CD4-positive, alpha-beta memory T cell (primary cell): ENCODE measurements at regions of chr10 and their contacts with region 1.

Region 1: GRCh38 chr10:102167861-102168260 is 15.7 kb downstream of the NOLC1 start:
- DNase-seq: no peak
- H3K4me3 ChIP-seq: no peak overlapping the region
- H3K4me3 Mint-ChIP-seq: no peak overlapping the region
- H3K27ac ChIP-seq: no peak overlapping the region
- H3K27ac Mint-ChIP-seq: peak overlapping the region in 1 of 7 donors; percentile 36
- H3K4me1 ChIP-seq: peaks cover 4% of the 10 kb centered on the region
- H3K4me1 Mint-ChIP-seq: peaks cover 4 to 11% (median 6%) of the 10 kb centered on the region in 4 donors
- H3K27me3 ChIP-seq: no peaks in the 10 kb centered on the region
- H3K27me3 Mint-ChIP-seq: no peaks in the 10 kb centered on the region

Region 2: DNA sequence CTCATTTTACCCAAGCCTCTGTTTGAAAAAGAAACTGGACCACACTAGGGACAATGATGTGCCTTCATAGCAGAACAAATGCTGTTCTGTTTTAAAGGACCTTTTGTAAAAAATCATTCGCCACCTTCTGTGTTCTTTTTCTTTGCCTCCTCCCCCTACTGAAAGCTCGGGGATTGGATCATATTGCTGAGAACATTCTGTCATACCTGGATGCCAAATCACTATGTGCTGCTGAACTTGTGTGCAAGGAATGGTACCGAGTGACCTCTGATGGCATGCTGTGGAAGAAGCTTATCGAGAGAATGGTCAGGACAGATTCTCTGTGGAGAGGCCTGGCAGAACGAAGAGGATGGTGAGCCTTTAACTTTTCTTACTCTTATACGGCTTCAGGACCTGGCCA is 642.0 kb before region 1 on chr10:
- CTCF ChIA-PET with region 1: no interaction called
- POLR2A ChIA-PET with region 1: no interaction called
- intact Hi-C with region 1: no loop called
- DNase-seq: no peak
- H3K4me3 ChIP-seq: no peak overlapping the region
- H3K4me3 Mint-ChIP-seq: no peak overlapping the region
- H3K27ac ChIP-seq: no peak overlapping the region
- H3K27ac Mint-ChIP-seq: no peak overlapping the region
- H3K4me1 ChIP-seq: no peaks in the 10 kb centered on the region
- H3K4me1 Mint-ChIP-seq: no peaks in the 10 kb centered on the region
- H3K27me3 ChIP-seq: no peaks in the 10 kb centered on the region
- H3K27me3 Mint-ChIP-seq: no peaks in the 10 kb centered on the region

Region 3: DNA sequence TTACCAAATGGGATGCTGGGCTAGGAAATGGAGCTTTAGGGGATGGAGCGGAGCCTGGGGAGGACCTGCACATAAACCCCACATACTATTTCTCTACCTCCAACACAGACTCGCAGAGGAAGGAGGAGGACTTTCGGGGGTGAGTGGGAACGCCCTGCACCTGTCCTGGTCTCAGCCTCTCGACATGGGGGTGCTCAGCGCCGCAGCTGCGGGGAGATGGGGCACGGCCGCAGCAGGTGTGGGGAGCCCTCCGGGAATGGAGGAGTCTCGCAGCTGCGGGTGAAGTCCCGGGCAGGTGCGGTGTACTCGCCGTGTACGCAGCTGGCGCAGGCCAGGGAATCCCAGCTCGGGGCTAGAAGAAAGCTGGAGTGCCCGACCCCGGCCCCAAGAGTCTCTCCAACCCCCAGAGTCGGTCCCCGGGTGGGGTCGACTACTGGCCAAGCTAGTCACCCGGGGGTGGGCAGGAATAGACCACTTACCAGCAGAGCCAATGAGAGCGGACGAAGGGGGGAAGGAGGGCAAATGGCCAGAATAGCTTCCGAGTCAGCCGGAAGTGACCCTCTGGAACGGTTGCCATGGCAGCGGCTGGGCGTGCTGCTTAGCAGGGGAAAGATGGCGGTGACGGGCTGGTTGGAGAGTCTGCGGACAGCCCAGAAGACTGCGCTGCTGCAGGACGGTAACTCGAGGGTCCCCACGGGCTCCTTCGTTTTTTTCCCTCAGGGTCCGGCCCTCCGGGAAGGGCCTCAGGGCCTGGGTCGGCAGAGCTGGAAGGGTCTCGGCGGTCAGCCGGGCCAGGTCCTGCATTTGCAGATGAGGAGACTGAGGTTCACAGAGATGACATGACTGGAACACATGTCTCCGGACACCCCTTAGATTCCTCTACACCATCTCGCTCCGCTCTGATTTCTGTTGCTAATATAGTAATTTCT is 579.9 kb before region 1 on chr10 and contains the starts of genes DPCD and POLL:
- CTCF ChIA-PET with region 1: no interaction called
- POLR2A ChIA-PET with region 1: no interaction called
- intact Hi-C with region 1: no loop called
- DNase-seq: peak; percentile 83 to 86 (median 85)
- H3K4me3 ChIP-seq: peak within 1 kb of the TSS; percentile 79 to 81
- H3K4me3 Mint-ChIP-seq: peak within 1 kb of the TSS; percentile 94 to 97 (median 94)
- H3K27ac ChIP-seq: peak within 1 kb of the TSS; percentile 64
- H3K27ac Mint-ChIP-seq: peak within 1 kb of the TSS; percentile 82 to 93 (median 91)
- H3K4me1 ChIP-seq: peaks cover 17% of the 10 kb centered on the region
- H3K4me1 Mint-ChIP-seq: peaks cover 11 to 40% (median 26%) of the 10 kb centered on the region in 4 donors
- H3K27me3 ChIP-seq: no peaks in the 10 kb centered on the region
- H3K27me3 Mint-ChIP-seq: no peaks in the 10 kb centered on the region
- total RNA-seq, gene DPCD: 1.0 to 1.2 TPM
- total RNA-seq, gene POLL: 57.0 to 59.3 TPM

Region 4: GRCh38 chr10:102188298-102188940 is 20.6 kb after region 1 on chr10:
- CTCF ChIA-PET with region 1: interaction called, 11 read pairs
- POLR2A ChIA-PET with region 1: no interaction called
- intact Hi-C with region 1: no loop called
- DNase-seq: no peak
- H3K4me3 ChIP-seq: no peak overlapping the region
- H3K4me3 Mint-ChIP-seq: peak overlapping the region in 2 of 8 donors; percentile 35 to 81
- H3K27ac ChIP-seq: peak overlapping the region; percentile 32
- H3K27ac Mint-ChIP-seq: peak overlapping the region in 5 of 7 donors; percentile 19 to 68 (median 55)
- H3K4me1 ChIP-seq: peaks cover 22% of the 10 kb centered on the region
- H3K4me1 Mint-ChIP-seq: peaks cover 9 to 17% (median 10%) of the 10 kb centered on the region in 4 donors
- H3K27me3 ChIP-seq: no peaks in the 10 kb centered on the region
- H3K27me3 Mint-ChIP-seq: no peaks in the 10 kb centered on the region

Region 5: GRCh38 chr10:102371295-102371694 is 203.4 kb after region 1 on chr10:
- CTCF ChIA-PET with region 1: no interaction called
- POLR2A ChIA-PET with region 1: no interaction called
- intact Hi-C with region 1: no loop called
- DNase-seq: no peak
- H3K4me3 ChIP-seq: no peak overlapping the region
- H3K4me3 Mint-ChIP-seq: no peak overlapping the region
- H3K27ac ChIP-seq: no peak overlapping the region
- H3K27ac Mint-ChIP-seq: no peak overlapping the region
- H3K4me1 ChIP-seq: no peaks in the 10 kb centered on the region
- H3K4me1 Mint-ChIP-seq: no peaks in the 10 kb centered on the region
- H3K27me3 ChIP-seq: no peaks in the 10 kb centered on the region
- H3K27me3 Mint-ChIP-seq: no peaks in the 10 kb centered on the region

Region 6: GRCh38 chr10:102399217-102400089 is 231.6 kb after region 1 on chr10:
- CTCF ChIA-PET with region 1: interaction called, 5 read pairs
- POLR2A ChIA-PET with region 1: interaction called, 3 read pairs
- intact Hi-C with region 1: loop called (anchors 1 kb)
- DNase-seq: peak; percentile 86 to 90 (median 87)
- H3K4me3 ChIP-seq: peak overlapping the region in 1 of 2 donors; percentile 49
- H3K4me3 Mint-ChIP-seq: peak overlapping the region; percentile 53 to 81 (median 74)
- H3K27ac ChIP-seq: peak overlapping the region; percentile 100
- H3K27ac Mint-ChIP-seq: peak overlapping the region; percentile 89 to 100 (median 100)
- H3K4me1 ChIP-seq: peaks cover 44% of the 10 kb centered on the region
- H3K4me1 Mint-ChIP-seq: peaks cover 19 to 68% (median 32%) of the 10 kb centered on the region in 4 donors
- H3K27me3 ChIP-seq: no peaks in the 10 kb centered on the region
- H3K27me3 Mint-ChIP-seq: no peaks in the 10 kb centered on the region

Region 7: DNA sequence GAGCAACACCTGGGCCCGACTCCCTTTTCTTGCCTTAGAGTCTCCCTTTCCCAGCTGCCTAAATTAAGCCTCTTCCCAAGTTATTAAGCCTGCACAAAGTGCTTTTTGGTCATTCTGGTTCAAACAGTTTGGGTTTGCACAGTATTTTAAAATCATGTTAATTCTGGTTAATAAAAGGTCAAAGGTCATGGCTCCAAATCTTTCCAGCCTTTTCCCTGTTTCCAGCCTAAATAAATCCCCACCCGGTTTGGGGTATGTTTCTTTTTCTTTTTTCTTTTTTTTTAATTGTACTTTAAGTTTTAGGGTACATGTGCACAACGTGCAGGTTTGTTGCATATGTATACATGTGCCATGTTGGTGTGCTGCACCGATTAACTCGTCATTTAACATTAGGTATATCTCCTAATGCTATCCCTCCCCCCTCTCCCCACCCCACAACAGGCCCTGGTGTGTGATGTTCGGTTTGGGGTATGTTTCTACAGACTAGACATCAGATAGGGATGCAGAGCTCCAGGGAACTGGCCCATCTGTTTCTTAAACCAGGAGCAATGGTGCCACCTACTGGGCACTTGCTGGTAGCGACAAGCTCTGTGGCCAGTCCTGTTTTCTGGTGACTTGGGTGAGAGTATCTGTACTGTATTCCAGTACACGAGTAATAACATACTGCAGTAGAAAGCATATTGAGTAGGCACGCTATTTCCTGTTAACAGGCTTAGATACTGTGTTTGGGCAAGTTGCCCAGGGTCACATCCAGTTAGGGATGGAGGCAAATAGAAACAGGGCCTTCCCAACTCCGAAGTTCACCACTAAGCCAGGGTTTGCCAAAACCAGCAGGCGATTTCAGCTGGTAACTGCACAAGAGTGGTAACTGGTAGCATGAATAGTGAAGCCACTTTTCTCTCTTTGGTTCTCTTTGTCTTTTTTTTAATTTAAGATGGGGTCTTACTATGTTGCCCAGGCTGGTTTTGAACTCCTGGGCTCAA is 415.9 kb after region 1 on chr10:
- CTCF ChIA-PET with region 1: interaction called, 33 read pairs
- POLR2A ChIA-PET with region 1: no interaction called
- intact Hi-C with region 1: loop called (anchors 1 kb)
- DNase-seq: peak; percentile 74 to 83 (median 76)
- H3K4me3 ChIP-seq: no peak overlapping the region
- H3K4me3 Mint-ChIP-seq: no peak overlapping the region
- H3K27ac ChIP-seq: no peak overlapping the region
- H3K27ac Mint-ChIP-seq: peak overlapping the region in 5 of 7 donors; percentile 7 to 84 (median 60)
- H3K4me1 ChIP-seq: peaks cover 8% of the 10 kb centered on the region
- H3K4me1 Mint-ChIP-seq: peaks cover 13 to 20% (median 15%) of the 10 kb centered on the region in 4 donors
- H3K27me3 ChIP-seq: no peaks in the 10 kb centered on the region
- H3K27me3 Mint-ChIP-seq: no peaks in the 10 kb centered on the region